GM23248 (cell line): ENCODE measurements at regions of chrX and their contacts with region 1.

Region 1: GRCh38 chrX:104113222-104113965 is 1.1 kb downstream of the ZCCHC18 start:
- DNase-seq: peak; percentile 67
- H3K4me3 ChIP-seq: peak overlapping the region; percentile 79
- H3K27ac ChIP-seq: no peak overlapping the region
- H3K4me1 ChIP-seq: no peaks in the 10 kb centered on the region
- H3K27me3 ChIP-seq: no peaks in the 10 kb centered on the region

Region 2: DNA sequence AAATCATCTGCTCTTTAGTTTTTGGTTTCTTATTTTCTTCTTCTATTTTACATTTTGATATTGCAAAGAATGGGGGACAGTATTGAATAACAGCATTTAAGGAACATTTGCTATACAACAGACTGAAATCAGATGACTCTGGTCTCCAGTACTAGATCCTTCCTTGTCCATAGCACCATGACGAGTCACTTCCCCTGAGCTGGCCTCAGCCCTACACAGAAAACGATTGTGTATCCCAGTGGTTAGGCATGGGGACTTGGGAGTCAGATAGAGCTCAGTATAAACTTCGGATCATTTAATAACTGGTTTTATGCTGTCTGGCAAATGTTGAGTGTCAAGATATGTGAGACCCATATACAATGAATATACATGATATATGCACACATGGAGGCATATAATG is 943.2 kb before region 1 on chrX:
- in situ Hi-C with region 1: no loop called
- DNase-seq: peak; percentile 45
- H3K4me3 ChIP-seq: no peak overlapping the region
- H3K27ac ChIP-seq: no peak overlapping the region
- H3K4me1 ChIP-seq: no peaks in the 10 kb centered on the region
- H3K27me3 ChIP-seq: no peaks in the 10 kb centered on the region

Region 3: DNA sequence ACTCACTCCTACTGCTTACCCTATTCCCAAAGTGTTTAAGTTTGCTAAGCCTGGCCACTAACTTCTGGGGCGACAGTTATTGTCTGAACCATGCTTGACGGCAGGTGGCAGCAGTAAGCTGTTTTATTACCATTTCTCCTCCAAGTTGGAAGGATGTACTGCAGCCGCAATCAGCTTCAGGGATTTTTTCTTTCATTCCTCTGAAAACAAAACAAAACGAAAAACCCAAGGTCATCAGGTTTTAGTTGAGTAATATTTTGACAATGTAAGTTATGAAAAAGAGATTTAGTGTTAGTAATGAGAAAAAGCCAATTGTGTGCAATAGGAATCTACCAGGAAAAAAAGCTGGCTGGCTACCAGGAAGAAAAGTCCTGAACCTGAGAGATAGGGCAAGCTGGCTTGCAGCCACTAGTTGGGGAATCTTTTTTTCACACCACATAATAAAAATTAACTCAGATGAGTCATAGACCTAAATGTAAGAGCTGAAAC is 268.2 kb before region 1 on chrX:
- in situ Hi-C with region 1: loop called (anchors 25 kb)
- DNase-seq: peak; percentile 80
- H3K4me3 ChIP-seq: peak overlapping the region; percentile 25; the same call in 1 of the 2 replicates
- H3K27ac ChIP-seq: peak overlapping the region; percentile 28; the same call in 1 of the 2 replicates
- H3K4me1 ChIP-seq: peaks cover 26% of the 10 kb centered on the region
- H3K27me3 ChIP-seq: no peaks in the 10 kb centered on the region

Region 4: GRCh38 chrX:103904301-103904700 is 209.1 kb before region 1 on chrX:
- in situ Hi-C with region 1: no loop called
- DNase-seq: no peak
- H3K4me3 ChIP-seq: no peak overlapping the region
- H3K27ac ChIP-seq: no peak overlapping the region
- H3K4me1 ChIP-seq: no peaks in the 10 kb centered on the region
- H3K27me3 ChIP-seq: no peaks in the 10 kb centered on the region